Naive thymus-derived CD4-positive, alpha-beta T cell (primary cell): ENCODE measurements at regions of chr3 and their contacts with region 1.

Region 1: GRCh38 chr3:186849374-186849975 is 7.0 kb downstream of the ADIPOQ start:
- DNase-seq: peak in 7 of 9 donors; percentile 41 to 77 (median 64)
- ATAC-seq: peak; percentile 90
- H3K4me3 ChIP-seq: no peak overlapping the region
- H3K4me3 Mint-ChIP-seq: no peak overlapping the region
- H3K27ac ChIP-seq: no peak overlapping the region
- H3K27ac Mint-ChIP-seq: peak overlapping the region in 4 of 9 donors; percentile 9 to 68 (median 37)
- H3K4me1 ChIP-seq: peaks cover 0 to 7% of the 10 kb centered on the region in 2 donors
- H3K4me1 Mint-ChIP-seq: peaks cover 14 to 30% (median 18%) of the 10 kb centered on the region in 7 donors
- H3K27me3 ChIP-seq: no peaks in the 10 kb centered on the region
- H3K27me3 Mint-ChIP-seq: peaks cover 0 to 20% (median 11%) of the 10 kb centered on the region in 5 donors

Region 2: GRCh38 chr3:186882881-186883685 is 33.6 kb after region 1 on chr3:
- CTCF ChIA-PET with region 1: no interaction called
- POLR2A ChIA-PET with region 1: interaction called, 3 read pairs
- intact Hi-C with region 1: loop called in 1 of 2 experiments (anchors 2 kb)
- DNase-seq: peak in 1 of 9 donors; percentile 64
- ATAC-seq: peak; percentile 45
- H3K4me3 ChIP-seq: no peak overlapping the region
- H3K4me3 Mint-ChIP-seq: peak overlapping the region in 2 of 10 donors; percentile 37 to 49
- H3K27ac ChIP-seq: no peak overlapping the region
- H3K27ac Mint-ChIP-seq: peak overlapping the region in 3 of 9 donors; percentile 47 to 64 (median 54)
- H3K4me1 ChIP-seq: peaks cover 13 to 25% of the 10 kb centered on the region in 2 donors
- H3K4me1 Mint-ChIP-seq: peaks cover 15 to 50% (median 41%) of the 10 kb centered on the region in 7 donors
- H3K27me3 ChIP-seq: no peaks in the 10 kb centered on the region
- H3K27me3 Mint-ChIP-seq: peaks cover 0 to 2% (median 0%) of the 10 kb centered on the region in 5 donors

Region 3: DNA sequence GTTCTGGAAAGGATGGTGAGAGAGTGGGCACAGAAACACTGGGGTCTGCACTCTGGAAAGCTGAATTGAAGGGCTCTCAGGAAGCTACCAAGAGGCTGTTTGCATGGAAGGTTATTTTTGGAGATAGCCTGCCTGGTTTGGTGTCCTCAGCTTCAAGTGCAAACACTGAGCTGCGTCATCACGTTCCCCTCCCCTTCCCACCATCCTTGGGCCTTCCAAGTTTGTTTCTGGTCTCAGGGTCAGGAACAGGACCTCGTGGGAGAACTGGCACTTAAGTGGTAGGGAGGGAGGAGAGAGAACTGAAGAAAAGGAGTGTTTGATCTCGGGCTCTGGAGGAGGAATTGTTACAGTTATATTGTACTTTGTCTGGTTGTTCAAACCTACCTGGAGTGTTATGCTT is 91.5 kb after region 1 on chr3:
- CTCF ChIA-PET with region 1: interaction called, 14 read pairs
- POLR2A ChIA-PET with region 1: interaction called, 4 read pairs
- intact Hi-C with region 1: no loop called
- DNase-seq: no peak
- ATAC-seq: no peak
- H3K4me3 ChIP-seq: no peak overlapping the region
- H3K4me3 Mint-ChIP-seq: no peak overlapping the region
- H3K27ac ChIP-seq: no peak overlapping the region
- H3K27ac Mint-ChIP-seq: peak overlapping the region in 4 of 9 donors; percentile 11 to 49 (median 39)
- H3K4me1 ChIP-seq: peaks cover 0 to 6% of the 10 kb centered on the region in 2 donors
- H3K4me1 Mint-ChIP-seq: peaks cover 25 to 66% (median 50%) of the 10 kb centered on the region in 7 donors
- H3K27me3 ChIP-seq: no peaks in the 10 kb centered on the region
- H3K27me3 Mint-ChIP-seq: no peaks in the 10 kb centered on the region

Region 4: DNA sequence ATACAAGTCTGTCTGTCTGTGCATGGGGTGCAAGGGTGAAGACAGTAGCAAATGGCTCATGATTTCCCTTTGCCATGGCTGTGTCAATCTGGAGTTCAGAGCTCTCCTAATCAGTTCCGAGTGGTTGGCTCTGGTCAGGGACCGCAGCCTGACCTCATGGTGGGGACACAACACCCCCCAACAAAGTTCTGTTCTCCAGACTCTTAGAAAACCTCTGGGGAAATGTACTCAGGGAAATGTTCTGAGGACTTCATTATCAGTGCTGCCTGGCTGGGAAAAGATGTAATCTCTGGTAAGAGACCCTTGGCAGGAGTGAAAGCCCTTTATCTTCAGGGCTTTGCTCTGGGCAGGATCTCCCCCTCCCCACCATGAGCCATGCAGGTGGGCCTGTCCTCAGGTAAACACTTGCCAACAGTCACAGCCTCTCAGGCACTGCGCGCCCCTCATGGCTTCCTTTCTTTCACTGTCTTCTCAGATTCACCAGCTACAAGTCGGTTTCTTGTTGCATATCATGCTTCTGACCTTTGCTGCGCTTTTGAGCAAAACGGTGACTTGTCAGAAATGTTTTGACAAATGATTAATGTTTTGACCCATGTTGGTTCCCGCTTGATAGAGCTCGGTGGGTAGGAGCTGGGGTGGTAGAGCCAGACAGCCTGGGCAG is 176.3 kb after region 1 on chr3:
- CTCF ChIA-PET with region 1: interaction called, 11 read pairs
- POLR2A ChIA-PET with region 1: interaction called, 7 read pairs
- intact Hi-C with region 1: loop called in 1 of 2 experiments (anchors 1 kb)
- DNase-seq: peak in 4 of 9 donors; percentile 35 to 45 (median 41)
- ATAC-seq: peak; percentile 17
- H3K4me3 ChIP-seq: peak overlapping the region; percentile 68
- H3K4me3 Mint-ChIP-seq: peak overlapping the region; percentile 88 to 97 (median 93)
- H3K27ac ChIP-seq: peak overlapping the region; percentile 78
- H3K27ac Mint-ChIP-seq: peak overlapping the region; percentile 86 to 99 (median 92)
- H3K4me1 ChIP-seq: peaks cover 31 to 45% of the 10 kb centered on the region in 2 donors
- H3K4me1 Mint-ChIP-seq: peaks cover 40 to 73% (median 61%) of the 10 kb centered on the region in 7 donors
- H3K27me3 ChIP-seq: no peaks in the 10 kb centered on the region
- H3K27me3 Mint-ChIP-seq: no peaks in the 10 kb centered on the region

Region 5: GRCh38 chr3:187066228-187066995 is 216.9 kb after region 1 on chr3:
- CTCF ChIA-PET with region 1: interaction called, 34 read pairs
- POLR2A ChIA-PET with region 1: interaction called, 4 read pairs
- intact Hi-C with region 1: loop called (anchors 1 kb)
- DNase-seq: peak in 7 of 9 donors; percentile 54 to 75 (median 67)
- ATAC-seq: peak; percentile 83
- H3K4me3 ChIP-seq: no peak overlapping the region
- H3K4me3 Mint-ChIP-seq: peak overlapping the region in 7 of 10 donors; percentile 18 to 42 (median 31)
- H3K27ac ChIP-seq: peak overlapping the region; percentile 14
- H3K27ac Mint-ChIP-seq: peak overlapping the region; percentile 61 to 92 (median 84)
- H3K4me1 ChIP-seq: peaks cover 13 to 38% of the 10 kb centered on the region in 2 donors
- H3K4me1 Mint-ChIP-seq: peaks cover 49 to 87% (median 79%) of the 10 kb centered on the region in 7 donors
- H3K27me3 ChIP-seq: no peaks in the 10 kb centered on the region
- H3K27me3 Mint-ChIP-seq: no peaks in the 10 kb centered on the region

Region 6: GRCh38 chr3:187112934-187113793 is 263.7 kb after region 1 on chr3:
- CTCF ChIA-PET with region 1: interaction called, 28 read pairs
- POLR2A ChIA-PET with region 1: interaction called, 10 read pairs
- intact Hi-C with region 1: loop called (anchors 1 kb)
- DNase-seq: peak in 6 of 9 donors; percentile 16 to 59 (median 48)
- ATAC-seq: peak; percentile 70
- H3K4me3 ChIP-seq: no peak overlapping the region
- H3K4me3 Mint-ChIP-seq: peak overlapping the region in 1 of 10 donors; percentile 13
- H3K27ac ChIP-seq: no peak overlapping the region
- H3K27ac Mint-ChIP-seq: no peak overlapping the region
- H3K4me1 ChIP-seq: no peaks in the 10 kb centered on the region
- H3K4me1 Mint-ChIP-seq: peaks cover 0 to 9% (median 6%) of the 10 kb centered on the region in 7 donors
- H3K27me3 ChIP-seq: no peaks in the 10 kb centered on the region
- H3K27me3 Mint-ChIP-seq: no peaks in the 10 kb centered on the region

Region 7: DNA sequence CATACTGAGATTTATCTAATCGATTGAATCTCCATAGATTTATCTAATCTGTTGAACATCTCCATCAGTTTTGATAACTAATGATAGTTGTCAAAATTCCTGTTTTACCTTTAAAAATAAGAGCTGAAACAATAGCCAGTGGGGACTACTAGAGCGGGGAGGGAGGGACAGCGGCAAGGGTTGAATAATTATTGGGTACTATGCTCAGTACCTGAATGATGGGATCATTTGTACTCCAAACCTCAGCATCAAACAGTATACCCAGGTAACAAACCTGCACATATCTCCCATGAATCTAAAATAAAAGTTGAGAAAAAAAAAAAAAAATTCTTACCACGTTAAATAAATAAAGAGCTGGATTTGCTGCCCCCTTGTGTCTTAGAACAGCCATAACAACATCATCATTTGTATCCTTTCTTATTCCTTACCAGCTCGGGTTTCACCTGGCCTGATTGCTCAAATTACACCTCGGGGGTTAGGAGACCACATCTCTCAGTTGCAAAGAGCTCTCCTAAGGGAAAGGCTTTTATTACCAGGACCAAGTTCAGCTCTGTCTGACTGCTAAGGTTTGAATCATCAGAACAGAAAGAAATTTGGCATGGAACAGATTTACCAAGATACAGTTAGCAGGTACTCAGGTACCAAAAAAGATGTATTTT is 315.5 kb after region 1 on chr3:
- CTCF ChIA-PET with region 1: interaction called, 56 read pairs
- POLR2A ChIA-PET with region 1: interaction called, 8 read pairs
- intact Hi-C with region 1: loop called (anchors 1 kb)
- DNase-seq: peak in 7 of 9 donors; percentile 53 to 78 (median 72)
- ATAC-seq: peak; percentile 86
- H3K4me3 ChIP-seq: no peak overlapping the region
- H3K4me3 Mint-ChIP-seq: no peak overlapping the region
- H3K27ac ChIP-seq: no peak overlapping the region
- H3K27ac Mint-ChIP-seq: peak overlapping the region in 1 of 9 donors; percentile 21
- H3K4me1 ChIP-seq: peaks cover 0 to 5% of the 10 kb centered on the region in 2 donors
- H3K4me1 Mint-ChIP-seq: peaks cover 3 to 15% (median 7%) of the 10 kb centered on the region in 7 donors
- H3K27me3 ChIP-seq: no peaks in the 10 kb centered on the region
- H3K27me3 Mint-ChIP-seq: peaks cover 0 to 39% (median 4%) of the 10 kb centered on the region in 5 donors

Region 8: DNA sequence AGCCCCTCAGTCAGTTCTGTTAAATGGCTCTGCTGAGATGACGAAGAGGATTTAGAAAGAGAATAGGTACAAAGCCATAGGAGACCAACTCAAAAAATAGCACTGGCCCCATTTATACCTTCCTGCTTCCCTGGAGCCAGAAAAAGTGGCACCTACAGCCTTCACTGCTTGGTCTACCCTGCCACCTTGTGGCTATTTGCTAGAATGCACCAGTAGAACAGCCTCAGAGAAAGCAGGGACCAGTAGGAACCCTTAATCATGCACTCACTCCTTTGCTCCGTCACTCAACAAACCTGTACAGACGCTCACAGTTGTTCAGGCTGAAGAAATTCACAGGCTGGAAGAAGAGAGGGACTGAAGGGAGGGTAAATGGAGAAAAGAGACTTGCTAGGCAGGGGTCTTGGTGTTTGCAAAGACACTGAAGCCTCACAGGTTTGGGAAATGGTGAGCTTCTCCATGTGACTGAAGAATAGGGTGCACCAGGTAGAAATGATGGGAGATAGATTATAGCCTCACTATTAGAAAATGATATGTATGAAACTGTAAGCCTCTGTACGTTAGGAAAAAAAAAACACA is 865.0 kb after region 1 on chr3:
- CTCF ChIA-PET with region 1: no interaction called
- POLR2A ChIA-PET with region 1: no interaction called
- intact Hi-C with region 1: no loop called
- DNase-seq: peak; percentile 37 to 73 (median 67)
- ATAC-seq: peak; percentile 92
- H3K4me3 ChIP-seq: no peak overlapping the region
- H3K4me3 Mint-ChIP-seq: no peak overlapping the region
- H3K27ac ChIP-seq: no peak overlapping the region
- H3K27ac Mint-ChIP-seq: peak overlapping the region in 1 of 9 donors; percentile 53
- H3K4me1 ChIP-seq: peaks cover 5 to 7% of the 10 kb centered on the region in 2 donors
- H3K4me1 Mint-ChIP-seq: peaks cover 8 to 17% (median 13%) of the 10 kb centered on the region in 7 donors
- H3K27me3 ChIP-seq: no peaks in the 10 kb centered on the region
- H3K27me3 Mint-ChIP-seq: peaks cover 0 to 8% (median 0%) of the 10 kb centered on the region in 5 donors